GM10248 (cell line): ENCODE measurements at regions of chr12 and their contacts with region 1.

Region 1: DNA sequence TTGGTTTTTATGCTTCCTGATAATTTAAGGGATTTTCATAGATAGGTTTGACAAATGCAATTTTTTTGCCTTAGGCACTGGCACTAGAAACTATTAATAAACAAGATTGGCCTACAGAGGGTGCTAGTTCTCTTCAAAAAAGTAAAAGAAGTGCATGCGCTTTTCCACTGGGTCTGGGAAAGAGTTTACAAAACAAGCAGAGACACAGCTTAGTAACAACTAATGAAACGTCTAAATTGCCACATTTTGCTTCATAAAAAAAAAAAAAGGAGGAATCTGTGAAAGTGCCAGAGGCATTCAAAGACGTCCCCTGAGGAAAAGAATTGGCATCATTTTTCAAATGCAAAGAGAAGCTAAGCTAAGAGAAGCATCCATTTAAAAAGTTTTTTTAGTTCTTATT is 58.3 kb upstream of the EEA1 start:
- DNase-seq: no peak
- CTCF ChIP-seq: peak; percentile 50

Region 2: GRCh38 chr12:92784795-92785562 is 202.4 kb before region 1 on chr12:
- CTCF ChIA-PET with region 1: interaction called, 10 read pairs
- POLR2A ChIA-PET with region 1: no interaction called
- DNase-seq: peak; percentile 50
- CTCF ChIP-seq: peak; percentile 55

Region 3: DNA sequence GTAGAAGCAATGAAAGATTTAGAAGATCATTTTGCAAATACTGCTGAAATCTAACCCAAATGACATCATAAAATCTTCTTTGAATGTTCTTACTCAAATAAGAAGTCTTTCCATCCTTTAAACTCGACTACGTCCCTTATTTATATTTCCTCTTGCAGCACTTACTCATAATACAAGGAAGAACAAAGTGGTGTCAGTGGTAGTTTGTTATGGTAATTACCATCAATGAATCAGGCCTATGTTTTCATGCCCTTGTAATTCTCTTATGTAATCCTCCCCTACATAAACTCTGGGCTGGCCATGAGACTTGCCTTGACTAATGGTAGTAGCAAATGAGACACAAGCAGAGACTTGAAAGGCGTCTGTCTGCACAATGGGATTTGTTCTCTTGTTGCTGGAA is 75.3 kb before region 1 on chr12:
- CTCF ChIA-PET with region 1: no interaction called
- POLR2A ChIA-PET with region 1: no interaction called
- DNase-seq: no peak
- CTCF ChIP-seq: no peak

Region 4: DNA sequence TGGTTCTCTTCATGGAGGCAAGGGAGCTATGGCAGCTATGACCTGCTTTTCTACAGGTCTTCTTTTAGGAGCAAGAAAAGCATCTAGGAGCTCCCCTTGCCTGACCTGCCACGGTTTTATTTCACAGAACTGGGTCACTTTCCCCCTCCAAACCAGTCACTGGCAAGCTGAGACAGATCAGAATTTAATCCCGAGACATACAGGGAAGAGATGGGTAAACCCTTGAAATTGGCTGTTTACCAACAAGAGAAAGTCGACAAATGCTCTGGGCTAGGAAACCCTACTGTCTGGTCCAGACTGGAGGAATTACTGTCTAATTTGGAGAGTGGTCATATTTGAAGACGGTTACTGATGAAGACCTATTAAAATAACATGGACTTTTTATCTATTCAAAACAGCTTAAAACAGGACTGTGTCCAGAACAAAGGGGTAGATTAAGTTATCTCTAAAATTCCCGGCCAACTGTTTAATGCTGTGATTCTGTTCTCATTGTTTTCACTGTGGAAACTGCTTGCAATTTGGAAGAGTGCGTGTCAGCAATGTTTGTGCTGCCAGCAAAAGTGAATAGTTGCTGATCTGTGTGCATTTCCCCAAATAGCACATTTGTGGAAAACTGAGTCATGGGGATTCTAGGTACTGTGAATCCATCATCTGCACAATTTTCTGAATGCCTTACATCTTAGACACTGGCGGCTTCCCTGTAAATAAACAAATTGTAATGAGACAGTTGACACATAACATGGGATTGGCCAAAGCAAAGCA is 15.1 kb after region 1 on chr12:
- CTCF ChIA-PET with region 1: interaction called, 37 read pairs
- POLR2A ChIA-PET with region 1: no interaction called
- DNase-seq: no peak
- CTCF ChIP-seq: no peak

Region 5: GRCh38 chr12:93016752-93017350 is 29.5 kb after region 1 on chr12:
- CTCF ChIA-PET with region 1: no interaction called
- POLR2A ChIA-PET with region 1: no interaction called
- DNase-seq: no peak
- CTCF ChIP-seq: no peak

Region 6: GRCh38 chr12:93072340-93072739 is 85.0 kb after region 1 on chr12:
- CTCF ChIA-PET with region 1: no interaction called
- POLR2A ChIA-PET with region 1: no interaction called
- DNase-seq: no peak
- CTCF ChIP-seq: no peak

Region 7: DNA sequence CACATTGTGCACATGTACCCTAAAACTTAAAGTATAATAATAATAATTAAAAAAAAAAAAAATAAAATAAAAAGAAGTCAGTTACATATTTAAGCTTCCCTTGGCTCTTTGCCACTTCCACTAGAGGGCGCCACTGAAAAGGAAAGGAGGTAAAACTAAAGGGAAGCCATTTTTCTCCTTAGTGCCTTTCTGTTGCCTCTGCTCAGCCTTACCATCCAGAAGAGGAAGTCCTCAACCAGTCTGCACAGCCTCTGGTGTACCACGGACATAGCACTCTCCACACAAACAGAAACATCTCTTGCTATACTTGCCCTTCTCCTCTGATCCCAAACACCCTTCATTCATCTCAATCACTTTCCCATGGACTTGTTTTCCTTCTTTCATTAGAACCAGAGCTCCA is 110.7 kb after region 1 on chr12:
- CTCF ChIA-PET with region 1: interaction called, 10 read pairs
- POLR2A ChIA-PET with region 1: no interaction called
- DNase-seq: no peak
- CTCF ChIP-seq: peak; percentile 53

Region 8: GRCh38 chr12:93390549-93391297 is 403.4 kb after region 1 on chr12:
- CTCF ChIA-PET with region 1: interaction called, 37 read pairs
- POLR2A ChIA-PET with region 1: interaction called, 6 read pairs
- DNase-seq: no peak
- CTCF ChIP-seq: no peak

Region 9: DNA sequence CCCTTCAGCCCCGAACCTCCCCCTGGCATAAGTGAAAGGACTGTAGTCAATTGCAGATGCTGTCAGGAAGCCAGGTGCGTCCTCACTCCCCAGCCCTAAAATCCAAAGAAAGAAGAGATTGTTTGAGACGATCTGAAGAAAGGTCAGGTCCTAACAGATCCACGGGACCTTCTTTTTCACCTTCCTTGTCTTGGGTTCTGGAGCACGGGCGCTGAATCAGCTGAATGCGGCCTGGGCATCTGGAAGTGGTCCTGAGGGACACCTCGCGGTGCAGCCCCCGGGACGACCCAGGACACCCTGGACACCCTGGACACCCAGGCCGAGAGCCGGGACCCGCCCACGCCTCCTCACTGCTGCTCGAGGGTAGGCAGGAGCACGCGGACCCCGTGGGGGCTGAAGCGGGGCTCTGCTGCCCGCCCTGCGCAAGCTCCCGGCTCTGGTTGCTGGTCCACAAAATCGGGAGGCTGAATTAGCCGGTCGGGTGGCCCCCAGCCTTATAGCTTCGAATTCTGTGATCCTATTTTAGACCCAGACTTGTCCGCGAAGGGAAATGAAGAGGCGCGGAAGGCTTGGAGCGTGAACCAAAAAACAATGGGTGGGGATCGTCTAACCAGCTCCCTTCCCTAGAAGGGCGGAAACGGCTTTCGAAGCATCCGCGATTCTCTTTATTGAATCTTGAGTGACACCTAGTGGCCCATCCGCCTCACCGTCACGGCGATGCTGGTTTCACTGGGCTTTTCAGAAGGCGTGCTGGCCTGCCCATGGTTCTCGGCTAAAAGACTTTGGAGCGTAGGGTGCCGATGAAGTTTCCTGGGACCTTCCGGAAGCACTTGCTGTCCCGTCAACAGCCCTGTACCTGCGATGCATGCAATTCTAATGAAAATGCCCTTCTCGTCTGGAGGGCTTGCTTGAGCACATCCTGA is 1114.6 kb after region 1 on chr12:
- CTCF ChIA-PET with region 1: interaction called, 20 read pairs
- POLR2A ChIA-PET with region 1: no interaction called
- DNase-seq: peak; percentile 81
- CTCF ChIP-seq: peak; percentile 95